ENCODE measurements at regions of chr15 and their contacts with region 1.

Region 1: DNA sequence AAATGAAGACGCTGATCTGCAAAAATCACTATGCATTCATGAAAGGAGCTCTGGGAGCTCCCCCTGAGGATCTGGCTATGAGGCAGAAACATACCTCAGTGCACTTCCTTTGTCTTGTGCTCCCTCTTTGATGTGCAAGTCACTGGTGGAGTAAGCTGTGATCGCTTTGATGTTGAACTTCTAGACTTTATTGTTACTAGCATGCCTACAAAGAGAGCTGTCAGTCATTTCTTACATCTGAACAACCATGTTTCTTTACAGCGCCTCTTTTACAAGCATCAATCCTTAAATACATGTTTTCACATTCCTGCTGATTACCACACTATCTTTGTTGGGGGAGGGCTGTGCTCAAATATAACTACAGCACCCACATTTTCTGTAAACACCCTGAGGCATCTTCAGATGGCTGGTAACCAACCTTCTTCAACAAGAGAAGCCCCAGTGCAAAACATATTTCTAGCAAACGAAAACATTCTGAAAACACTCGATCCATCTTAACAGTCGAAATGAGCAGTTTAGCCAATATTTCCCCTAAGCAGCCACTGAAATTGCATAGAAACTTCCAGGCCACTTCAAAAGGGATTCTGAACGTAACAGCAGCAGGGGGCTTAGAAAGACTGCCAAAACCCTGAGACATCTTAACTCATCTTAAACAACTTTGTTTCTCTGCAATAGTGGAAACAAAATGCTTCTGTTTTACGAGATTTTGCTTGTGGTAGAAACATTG is 101.9 kb upstream of the ICE2 start:
- DNase-seq: peak; percentile 51
- ATAC-seq: peak; percentile 64
- H3K4me3 Mint-ChIP-seq: peak overlapping the region; percentile 72
- H3K27ac Mint-ChIP-seq: peak overlapping the region; percentile 96
- H3K4me1 Mint-ChIP-seq: peaks cover 86% of the 10 kb centered on the region
- H3K27me3 Mint-ChIP-seq: no peaks in the 10 kb centered on the region
- CTCF ChIP-seq: no peak

Region 2: GRCh38 chr15:60568301-60568742 is 12.5 kb before region 1 on chr15:
- CTCF ChIA-PET with region 1: interaction called, 52 read pairs
- POLR2A ChIA-PET with region 1: interaction called, 19 read pairs
- intact Hi-C with region 1: no loop called
- DNase-seq: peak; percentile 39
- ATAC-seq: peak; percentile 17
- H3K4me3 Mint-ChIP-seq: peak overlapping the region; percentile 36
- H3K27ac Mint-ChIP-seq: peak overlapping the region; percentile 78
- H3K4me1 Mint-ChIP-seq: peaks cover 89% of the 10 kb centered on the region
- H3K27me3 Mint-ChIP-seq: no peaks in the 10 kb centered on the region
- CTCF ChIP-seq: no peak